Naive thymus-derived CD8-positive, alpha-beta T cell (primary cell): ENCODE measurements at regions of chr1 and their contacts with region 1.

Region 1: DNA sequence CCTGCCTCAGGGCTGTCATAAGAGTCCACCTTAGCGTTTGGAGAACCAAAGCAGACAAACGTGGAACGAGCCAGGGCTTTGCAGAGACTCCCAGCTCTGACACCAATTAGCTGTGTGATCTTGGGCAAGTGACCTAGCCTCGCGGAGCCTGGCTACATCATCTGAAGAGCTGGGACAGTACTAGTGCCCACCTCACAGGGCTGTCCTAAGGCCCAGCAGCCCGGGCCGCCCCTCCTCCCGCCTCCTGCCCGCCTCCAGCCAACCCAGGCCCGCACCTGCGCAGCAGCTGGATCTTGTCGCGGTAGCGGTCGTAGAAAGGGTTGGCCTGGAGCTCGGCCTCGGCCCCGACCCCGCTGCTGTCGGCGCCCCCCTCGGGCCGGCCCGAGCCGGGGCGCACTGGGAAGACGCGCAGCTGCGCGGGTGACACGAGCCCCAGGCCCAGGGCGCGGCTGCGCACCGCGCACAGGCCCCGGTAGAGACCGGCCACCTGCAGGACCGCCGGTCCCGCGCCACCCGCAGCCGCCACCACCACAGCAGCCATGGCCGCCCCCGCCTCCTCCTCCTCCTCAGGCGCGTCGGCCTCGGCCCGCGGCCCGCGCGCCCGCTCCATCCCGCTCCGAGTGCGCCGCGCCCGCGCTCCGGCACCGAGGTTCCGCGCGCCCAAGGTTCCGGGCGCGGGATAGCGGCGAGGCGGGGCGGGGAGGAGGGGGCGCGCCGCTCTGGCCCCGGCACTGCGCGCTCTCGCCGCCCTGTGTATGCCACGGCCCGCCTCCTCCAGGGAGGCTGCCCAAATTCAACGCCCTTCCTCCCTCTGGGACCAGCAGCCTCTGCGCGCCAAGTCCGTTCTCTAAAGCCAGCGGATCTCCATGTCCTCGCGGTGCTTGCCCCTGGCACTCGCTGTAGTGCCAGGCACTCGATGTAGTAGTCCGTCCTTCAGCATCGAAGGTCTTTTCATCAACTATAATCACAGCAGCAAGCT is at the start of gene ATPAF1:
- DNase-seq: peak; percentile 23 to 69 (median 50)
- ATAC-seq: peak; percentile 85
- H3K4me3 Mint-ChIP-seq: peak within 1 kb of the TSS in 8 of 10 donors; percentile 81 to 92 (median 86)
- H3K27ac Mint-ChIP-seq: peak within 1 kb of the TSS; percentile 22 to 89 (median 80)
- H3K4me1 Mint-ChIP-seq: peaks cover 17 to 32% (median 20%) of the 10 kb centered on the region in 4 donors
- H3K27me3 Mint-ChIP-seq: no peaks in the 10 kb centered on the region
- polyA plus RNA-seq, gene ATPAF1: 66.4 to 68.0 (median 66.7) TPM

Region 2: DNA sequence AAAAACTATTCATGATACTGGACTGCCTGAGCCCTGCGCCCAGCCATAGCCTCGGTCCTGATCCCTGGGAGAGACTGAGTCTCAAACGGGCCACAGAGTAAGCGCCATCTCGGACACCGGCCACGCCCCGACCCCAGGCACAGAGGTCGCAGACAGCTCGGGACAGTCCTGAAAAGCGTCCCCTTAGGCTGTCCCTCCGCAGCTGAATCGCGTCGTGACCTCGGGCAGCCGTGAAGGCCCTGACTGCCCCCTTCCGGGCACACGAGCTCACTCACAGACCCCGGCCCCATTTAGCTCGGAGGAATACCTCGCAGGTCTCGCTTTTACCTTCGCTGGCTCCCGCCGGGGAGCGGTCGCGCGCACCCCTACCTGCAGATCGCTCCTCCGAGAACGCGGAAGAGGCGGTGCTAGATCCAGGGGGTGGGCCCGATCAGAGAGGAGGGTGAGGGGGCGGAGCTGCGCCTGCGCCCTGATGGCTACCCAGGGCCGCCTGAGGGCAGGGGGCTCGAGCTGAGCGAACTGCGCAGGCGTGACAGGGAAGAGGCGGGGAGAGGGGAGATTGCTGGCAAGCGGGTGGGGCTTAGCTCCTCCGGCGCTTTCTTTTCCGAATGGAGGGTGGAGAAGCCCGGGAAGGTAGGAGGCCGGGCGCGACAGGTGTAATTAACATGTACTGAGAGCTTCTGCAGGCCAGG is 64.1 kb before region 1 on chr1 and contains the start of gene MKNK1:
- POLR2A ChIA-PET with region 1: interaction called, 16 read pairs
- DNase-seq: peak; percentile 94 to 99 (median 99)
- ATAC-seq: peak; percentile 91 to 93
- H3K4me3 Mint-ChIP-seq: peak within 1 kb of the TSS; percentile 91 to 97 (median 94)
- H3K27ac Mint-ChIP-seq: peak within 1 kb of the TSS; percentile 88 to 96 (median 94)
- H3K4me1 Mint-ChIP-seq: peaks cover 39 to 70% (median 63%) of the 10 kb centered on the region in 4 donors
- H3K27me3 Mint-ChIP-seq: no peaks in the 10 kb centered on the region
- polyA plus RNA-seq, gene MKNK1: 17.6 to 19.7 (median 18.7) TPM

Region 3: DNA sequence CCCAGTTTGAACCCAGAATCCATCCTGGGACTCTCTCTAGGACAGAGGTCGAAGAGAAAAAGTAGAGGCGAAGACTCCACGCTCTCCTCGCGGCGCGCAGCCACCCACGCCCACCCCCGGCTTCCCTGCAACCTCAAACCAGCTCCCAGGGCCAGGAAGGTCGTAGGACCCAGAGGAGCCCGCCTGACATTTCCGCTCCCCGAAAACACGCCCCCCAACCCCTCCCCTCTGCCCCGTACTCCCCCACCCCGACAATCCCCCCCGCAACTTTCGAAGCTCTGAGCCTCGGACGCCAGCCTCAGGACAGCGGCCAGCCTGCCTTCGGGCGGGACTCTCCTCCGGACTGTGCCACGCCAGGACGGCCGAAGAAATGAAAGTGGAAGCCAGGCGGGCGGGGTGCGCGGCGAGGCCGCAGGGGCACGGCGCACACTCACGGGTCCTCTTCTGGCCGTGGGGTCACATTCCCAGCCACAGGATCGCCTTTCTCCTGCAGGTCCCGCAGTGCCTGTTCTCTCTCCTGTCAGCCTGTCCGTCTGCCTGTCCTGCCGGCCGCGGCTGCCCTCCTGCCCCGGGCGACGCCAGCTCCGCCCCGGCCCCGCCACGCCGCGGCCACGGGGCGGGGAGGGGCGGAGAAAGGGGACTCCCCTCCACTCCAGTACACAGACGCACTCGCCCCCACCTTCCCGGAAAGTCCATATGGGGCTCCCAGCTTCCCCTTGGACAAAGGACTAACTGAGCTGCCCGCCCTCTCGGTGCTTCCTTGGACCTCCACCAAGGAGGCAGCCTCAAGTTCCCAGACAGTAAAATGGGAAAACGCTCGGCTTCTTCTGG is 51.6 kb before region 1 on chr1 and contains the start of gene MOB3C:
- POLR2A ChIA-PET with region 1: interaction called, 18 read pairs
- DNase-seq: peak; percentile 49 to 81 (median 60)
- ATAC-seq: peak; percentile 81 to 85
- H3K4me3 Mint-ChIP-seq: peak within 1 kb of the TSS; percentile 90 to 97 (median 94)
- H3K27ac Mint-ChIP-seq: peak within 1 kb of the TSS; percentile 89 to 97 (median 94)
- H3K4me1 Mint-ChIP-seq: peaks cover 22 to 66% (median 51%) of the 10 kb centered on the region in 4 donors
- H3K27me3 Mint-ChIP-seq: no peaks in the 10 kb centered on the region
- polyA plus RNA-seq, gene MOB3C: 8.3 to 17.5 (median 8.4) TPM